ENCODE measurements at regions of chr13 and their contacts with region 1.

Region 1: GRCh38 chr13:49319951-49320350 is 72.2 kb downstream of the CDADC1 start:
- DNase-seq: no peak
- H3K4me3 ChIP-seq: no peak overlapping the region
- CTCF ChIP-seq: no peak
- POLR2A ChIP-seq: no peak

Region 2: DNA sequence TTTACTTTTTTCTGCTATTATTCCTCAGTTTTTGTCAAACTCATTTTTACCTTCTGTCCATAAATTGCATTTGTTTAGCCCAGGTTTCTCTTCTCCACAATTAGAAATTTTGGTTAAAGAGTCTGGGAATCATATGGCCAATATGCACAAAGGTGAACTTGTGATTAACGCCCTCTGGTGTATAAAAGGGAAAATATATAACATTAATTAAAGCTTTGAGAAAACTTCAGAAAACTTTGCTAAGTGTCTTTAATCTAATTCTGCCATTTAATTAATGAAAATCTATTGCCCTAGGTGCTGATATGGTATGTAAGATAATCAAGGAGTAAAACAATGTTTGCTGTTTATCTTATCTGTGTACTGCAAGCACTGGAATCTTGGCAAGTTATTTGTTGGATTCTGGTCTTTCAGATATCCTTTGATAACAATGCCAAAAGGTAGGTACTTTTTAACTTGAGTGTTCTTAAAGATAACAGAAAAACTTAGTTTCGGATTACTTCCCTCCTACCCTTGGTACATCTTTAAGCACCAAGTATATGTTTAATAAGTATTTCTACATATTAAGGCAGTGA is 1721.5 kb before region 1 on chr13:
- intact Hi-C with region 1: loop called (anchors 5 kb)
- DNase-seq: no peak
- H3K4me3 ChIP-seq: no peak overlapping the region
- CTCF ChIP-seq: no peak
- POLR2A ChIP-seq: no peak

Measured in lower leg skin (tissue), 4 donors.